ENCODE measurements at regions of chr12 and their contacts with region 1.

Region 1: GRCh38 chr12:8687846-8688601 is 9.8 kb upstream of the RIMKLB start:
- DNase-seq: peak; percentile 92
- H3K4me3 ChIP-seq: no peak overlapping the region
- H3K27ac ChIP-seq: peak overlapping the region; percentile 61 to 77 (median 70)
- H3K4me1 ChIP-seq: peaks cover 15 to 40% (median 38%) of the 10 kb centered on the region in 4 donors
- H3K27me3 ChIP-seq: no peaks in the 10 kb centered on the region
- CTCF ChIP-seq: peak in 1 of 3 experiments; percentile 6
- EP300 ChIP-seq: no peak
- POLR2A ChIP-seq: peak; percentile 14

Region 2: DNA sequence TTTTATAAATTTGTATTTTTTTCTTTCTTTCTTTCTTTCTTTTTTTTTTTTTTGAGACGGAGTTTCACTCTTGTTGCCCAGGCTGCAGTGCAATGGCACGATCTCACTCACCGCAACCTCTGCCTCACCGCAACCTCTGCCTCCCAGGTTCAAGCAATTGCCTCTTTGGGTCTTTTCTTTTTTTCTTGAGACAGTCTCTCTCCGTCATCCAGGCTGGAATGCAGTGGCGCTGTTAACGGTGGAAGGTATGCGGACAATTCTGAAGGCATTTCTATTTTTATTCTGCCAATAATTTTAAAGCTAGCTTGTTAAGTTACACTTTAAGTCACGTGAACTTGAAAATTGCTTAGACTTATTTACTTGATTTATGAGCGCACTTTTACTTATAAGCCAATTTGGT is 217.5 kb after region 1 on chr12:
- intact Hi-C with region 1: loop called (anchors 5 kb)
- DNase-seq: no peak
- H3K4me3 ChIP-seq: peak overlapping the region in 2 of 4 donors; percentile 7 to 11
- H3K27ac ChIP-seq: peak overlapping the region in 2 of 4 donors; percentile 1 to 65
- H3K4me1 ChIP-seq: peaks cover 4 to 14% (median 7%) of the 10 kb centered on the region in 4 donors
- H3K27me3 ChIP-seq: no peaks in the 10 kb centered on the region
- CTCF ChIP-seq: peak in 1 of 3 experiments; percentile 9
- EP300 ChIP-seq: no peak
- POLR2A ChIP-seq: no peak

Region 3: GRCh38 chr12:9049520-9050133 is 361.6 kb after region 1 on chr12:
- intact Hi-C with region 1: loop called (anchors 10 kb)
- DNase-seq: no peak
- H3K4me3 ChIP-seq: no peak overlapping the region
- H3K27ac ChIP-seq: no peak overlapping the region
- H3K4me1 ChIP-seq: peaks cover 0 to 3% (median 0%) of the 10 kb centered on the region in 4 donors
- H3K27me3 ChIP-seq: no peaks in the 10 kb centered on the region
- CTCF ChIP-seq: peak; percentile 30 to 52 (median 32)
- EP300 ChIP-seq: no peak
- POLR2A ChIP-seq: no peak